Heart left ventricle (tissue), 16 donors: ENCODE measurements at regions of chr10 and their contacts with region 1.

Region 1: DNA sequence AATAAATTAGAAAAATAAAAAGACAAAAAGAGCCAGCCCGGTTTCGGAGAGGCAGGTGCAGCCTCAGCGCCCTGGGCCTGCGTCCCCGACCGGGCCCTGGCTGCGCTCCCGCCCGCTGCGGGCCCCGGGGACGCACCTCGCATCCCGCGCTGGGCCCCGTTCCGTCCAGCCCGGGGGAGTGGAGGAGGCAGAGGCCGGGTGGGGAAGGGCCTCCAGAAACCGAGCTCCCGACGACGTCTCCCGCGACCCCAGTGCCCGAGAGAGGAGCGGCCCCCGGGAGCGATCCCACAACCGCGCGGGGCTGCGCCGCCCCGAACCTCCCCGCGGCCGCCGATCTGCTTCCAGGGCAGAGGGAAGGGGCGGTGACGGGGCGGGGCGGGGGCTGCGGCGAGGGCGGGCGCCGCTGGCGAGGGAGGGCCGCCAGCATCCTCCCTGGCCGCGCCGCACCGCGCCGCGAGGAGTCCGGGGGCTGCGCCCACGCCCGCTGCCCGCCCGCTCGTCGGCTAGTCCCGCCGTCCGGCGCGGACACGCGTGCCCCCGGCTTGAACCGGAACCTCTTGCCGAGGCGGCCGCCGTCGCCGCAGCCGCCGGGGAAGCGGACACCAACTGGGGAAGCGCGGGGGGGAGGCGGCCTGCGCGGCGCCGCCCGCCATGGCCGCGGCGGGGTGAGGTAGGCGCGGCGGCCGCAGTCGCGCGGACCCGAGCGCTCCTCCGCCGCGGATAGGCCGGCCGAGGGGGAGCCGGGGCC is at the start of gene CCNY:
- DNase-seq: peak; percentile 84 to 91 (median 88)
- ATAC-seq: peak; percentile 77 to 92 (median 88)
- H3K4me3 ChIP-seq: peak within 1 kb of the TSS; percentile 77 to 99 (median 95)
- H3K27ac ChIP-seq: peak within 1 kb of the TSS; percentile 83 to 94 (median 90)
- H3K4me1 ChIP-seq: peaks cover 19 to 78% (median 66%) of the 10 kb centered on the region in 12 donors
- H3K27me3 ChIP-seq: no peaks in the 10 kb centered on the region
- CTCF ChIP-seq: peak in 1 of 12 donors; percentile 6
- POLR2A ChIP-seq: peak in 1 of 2 donors; percentile 73
- total RNA-seq, gene CCNY: 39.7 to 106 (median 81.6) TPM

Region 2: DNA sequence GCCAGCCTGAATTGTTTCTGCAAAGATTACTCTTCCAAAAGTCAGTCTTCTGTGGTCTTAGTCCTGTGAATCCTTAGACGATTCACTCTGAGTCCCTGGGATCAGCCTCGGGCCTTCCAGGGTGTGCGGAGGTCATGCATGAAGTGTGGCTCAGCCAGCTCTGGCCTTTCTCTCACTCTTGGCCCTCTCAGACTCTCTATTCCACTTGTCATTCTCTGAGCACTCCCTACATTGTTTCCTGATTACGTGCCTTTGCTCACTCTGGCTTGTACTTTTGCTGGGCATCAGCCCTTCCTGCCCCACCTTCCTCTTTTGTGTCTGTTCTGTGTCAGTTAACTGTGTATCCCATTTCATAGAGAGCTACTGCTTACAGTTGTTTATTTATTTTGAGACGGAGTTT is 36.1 kb after region 1 on chr10:
- intact Hi-C with region 1: loop called in 9 of 10 experiments (anchors 2 to 5 kb)
- DNase-seq: peak; percentile 70 to 82 (median 74)
- ATAC-seq: peak; percentile 96 to 97 (median 96)
- H3K4me3 ChIP-seq: no peak overlapping the region
- H3K27ac ChIP-seq: peak overlapping the region; percentile 55 to 93 (median 84)
- H3K4me1 ChIP-seq: peaks cover 16 to 98% (median 73%) of the 10 kb centered on the region in 12 donors
- H3K27me3 ChIP-seq: no peaks in the 10 kb centered on the region
- CTCF ChIP-seq: no peak
- POLR2A ChIP-seq: peak in 1 of 2 donors; percentile 26

Region 3: GRCh38 chr10:35379226-35380137 is 43.2 kb after region 1 on chr10:
- intact Hi-C with region 1: loop called in 8 of 10 experiments (anchors 5 kb)
- DNase-seq: peak in 4 of 5 donors; percentile 66 to 75 (median 70)
- ATAC-seq: peak; percentile 67 to 92 (median 86)
- H3K4me3 ChIP-seq: peak overlapping the region in 5 of 12 donors; percentile 1 to 24 (median 16)
- H3K27ac ChIP-seq: peak overlapping the region; percentile 66 to 88 (median 79)
- H3K4me1 ChIP-seq: peaks cover 16 to 93% (median 70%) of the 10 kb centered on the region in 12 donors
- H3K27me3 ChIP-seq: no peaks in the 10 kb centered on the region
- CTCF ChIP-seq: peak in 5 of 12 donors; percentile 20 to 48 (median 26)
- POLR2A ChIP-seq: no peak

Region 4: GRCh38 chr10:35387768-35388167 is 51.5 kb after region 1 on chr10:
- intact Hi-C with region 1: loop called in 1 of 10 experiments (anchors 5 kb)
- DNase-seq: no peak
- ATAC-seq: peak in 2 of 4 donors; percentile 21 to 31
- H3K4me3 ChIP-seq: no peak overlapping the region
- H3K27ac ChIP-seq: peak overlapping the region in 11 of 12 donors; percentile 6 to 84 (median 61)
- H3K4me1 ChIP-seq: peaks cover 13 to 90% (median 59%) of the 10 kb centered on the region in 12 donors
- H3K27me3 ChIP-seq: no peaks in the 10 kb centered on the region
- CTCF ChIP-seq: no peak
- POLR2A ChIP-seq: no peak

Region 5: GRCh38 chr10:35447693-35448407 is 111.6 kb after region 1 on chr10:
- intact Hi-C with region 1: loop called in 4 of 10 experiments (anchors 5 to 10 kb)
- DNase-seq: no peak
- ATAC-seq: peak in 3 of 4 donors; percentile 29 to 36 (median 31)
- H3K4me3 ChIP-seq: peak overlapping the region in 3 of 12 donors; percentile 6 to 12 (median 11)
- H3K27ac ChIP-seq: peak overlapping the region; percentile 69 to 95 (median 82)
- H3K4me1 ChIP-seq: peaks cover 0 to 84% (median 74%) of the 10 kb centered on the region in 12 donors
- H3K27me3 ChIP-seq: no peaks in the 10 kb centered on the region
- CTCF ChIP-seq: no peak
- POLR2A ChIP-seq: no peak

Region 6: DNA sequence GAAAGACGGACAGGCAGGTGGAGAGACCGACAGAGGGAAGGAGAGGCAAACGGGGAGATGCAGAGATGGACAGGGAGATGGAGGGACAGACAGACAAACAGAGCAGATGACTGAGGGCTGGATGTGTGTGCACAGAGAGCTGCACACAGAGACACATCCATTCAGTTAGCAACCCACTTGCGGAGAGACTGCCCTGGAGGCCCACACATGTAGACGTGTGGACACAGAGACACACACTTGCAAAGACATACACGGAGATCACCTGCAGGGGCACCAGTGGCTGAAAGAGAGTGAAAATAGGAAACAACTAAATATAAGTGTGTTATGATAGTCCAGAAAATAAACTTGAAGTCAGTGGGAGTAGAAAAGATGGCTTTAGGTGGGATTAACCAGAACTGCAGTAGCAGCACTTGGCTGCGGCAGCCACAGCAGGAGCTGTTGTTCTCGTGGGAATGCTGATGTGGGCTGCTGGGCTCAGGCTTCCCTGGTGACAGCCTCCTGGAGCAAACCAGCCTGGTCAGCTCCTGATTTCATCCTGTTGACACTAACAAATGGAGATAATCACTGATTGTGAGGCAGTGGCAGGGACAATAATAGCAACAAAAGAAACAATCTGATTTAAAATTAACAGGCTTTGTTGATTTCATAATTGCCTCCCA is 134.1 kb after region 1 on chr10:
- intact Hi-C with region 1: no loop called
- DNase-seq: peak in 2 of 5 donors; percentile 41 to 52
- ATAC-seq: peak in 3 of 4 donors; percentile 77 to 83 (median 78)
- H3K4me3 ChIP-seq: no peak overlapping the region
- H3K27ac ChIP-seq: peak overlapping the region in 8 of 12 donors; percentile 2 to 66 (median 40)
- H3K4me1 ChIP-seq: peaks cover 3 to 68% (median 52%) of the 10 kb centered on the region in 12 donors
- H3K27me3 ChIP-seq: no peaks in the 10 kb centered on the region
- CTCF ChIP-seq: peak in 1 of 12 donors; percentile 13
- POLR2A ChIP-seq: no peak

Region 7: DNA sequence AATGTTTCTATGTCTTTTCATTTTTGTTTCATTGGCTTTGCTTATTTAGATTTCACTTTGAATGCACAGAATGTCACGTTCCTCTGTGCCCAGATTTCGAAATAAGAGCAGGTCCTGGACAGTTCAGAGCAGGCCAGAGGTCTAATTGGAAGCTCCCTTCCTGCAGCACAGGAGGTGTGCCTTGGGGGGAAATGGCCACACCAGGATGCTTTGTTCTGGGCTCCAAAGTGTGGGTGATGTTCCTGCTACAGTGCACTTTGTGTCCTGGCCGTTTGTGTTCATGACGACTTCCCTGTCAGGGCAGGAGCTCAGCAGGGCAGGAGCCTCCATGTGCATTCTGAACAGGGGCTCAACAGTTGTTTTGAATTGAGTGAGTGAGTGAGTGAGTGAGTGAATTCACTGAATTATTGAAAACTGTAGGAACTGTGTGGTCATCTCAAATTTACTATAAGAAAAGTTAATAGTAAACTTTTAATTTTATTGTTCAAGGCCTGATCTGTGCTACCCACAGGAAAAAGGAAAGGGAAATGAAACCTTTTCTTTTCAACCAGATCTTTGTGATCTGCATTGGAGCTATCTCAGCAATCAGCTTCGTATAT is 159.4 kb after region 1 on chr10:
- intact Hi-C with region 1: loop called in 1 of 10 experiments (anchors 10 kb)
- DNase-seq: peak in 2 of 5 donors; percentile 33 to 52
- ATAC-seq: peak; percentile 69 to 76 (median 72)
- H3K4me3 ChIP-seq: no peak overlapping the region
- H3K27ac ChIP-seq: peak overlapping the region in 11 of 12 donors; percentile 0 to 64 (median 35)
- H3K4me1 ChIP-seq: peaks cover 0 to 73% (median 32%) of the 10 kb centered on the region in 12 donors
- H3K27me3 ChIP-seq: no peaks in the 10 kb centered on the region
- CTCF ChIP-seq: no peak
- POLR2A ChIP-seq: no peak

Region 8: DNA sequence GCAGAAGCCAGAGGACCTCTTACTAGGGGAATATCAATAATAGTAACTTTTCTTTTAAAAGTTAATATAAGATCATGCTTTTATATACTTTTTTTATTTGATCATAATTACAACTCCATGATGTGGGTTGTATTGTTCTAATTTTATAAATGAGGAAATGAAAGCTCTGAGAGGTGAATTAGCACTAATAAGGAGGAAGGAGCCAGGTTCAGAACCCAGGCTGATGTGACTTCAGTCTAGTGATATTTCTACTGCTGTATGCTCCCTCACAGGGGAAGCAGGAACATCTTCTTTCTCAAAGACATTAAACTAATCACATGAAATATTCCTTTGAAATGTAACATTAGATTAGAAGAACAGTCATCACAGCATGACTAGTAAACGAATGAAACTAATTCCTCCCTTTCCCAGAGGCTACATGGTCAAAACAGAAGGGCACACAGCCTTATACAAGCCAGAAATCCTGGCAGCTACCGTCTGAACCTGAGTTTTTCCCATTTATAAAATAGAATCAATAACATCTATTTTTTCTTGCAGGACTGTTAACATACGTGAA is 187.5 kb after region 1 on chr10:
- intact Hi-C with region 1: no loop called
- DNase-seq: no peak
- ATAC-seq: no peak
- H3K4me3 ChIP-seq: no peak overlapping the region
- H3K27ac ChIP-seq: no peak overlapping the region
- H3K4me1 ChIP-seq: peaks cover 0 to 19% (median 0%) of the 10 kb centered on the region in 12 donors
- H3K27me3 ChIP-seq: no peaks in the 10 kb centered on the region
- CTCF ChIP-seq: no peak
- POLR2A ChIP-seq: no peak

Region 9: GRCh38 chr10:35546824-35547273 is 210.6 kb after region 1 on chr10:
- intact Hi-C with region 1: loop called in 1 of 10 experiments (anchors 10 kb)
- DNase-seq: no peak
- ATAC-seq: no peak
- H3K4me3 ChIP-seq: no peak overlapping the region
- H3K27ac ChIP-seq: no peak overlapping the region
- H3K4me1 ChIP-seq: peaks cover 0 to 21% (median 5%) of the 10 kb centered on the region in 12 donors
- H3K27me3 ChIP-seq: no peaks in the 10 kb centered on the region
- CTCF ChIP-seq: peak in 1 of 12 donors; percentile 8
- POLR2A ChIP-seq: no peak